PC-9 (cell line): ENCODE measurements at regions of chr6 and their contacts with region 1.

Region 1: DNA sequence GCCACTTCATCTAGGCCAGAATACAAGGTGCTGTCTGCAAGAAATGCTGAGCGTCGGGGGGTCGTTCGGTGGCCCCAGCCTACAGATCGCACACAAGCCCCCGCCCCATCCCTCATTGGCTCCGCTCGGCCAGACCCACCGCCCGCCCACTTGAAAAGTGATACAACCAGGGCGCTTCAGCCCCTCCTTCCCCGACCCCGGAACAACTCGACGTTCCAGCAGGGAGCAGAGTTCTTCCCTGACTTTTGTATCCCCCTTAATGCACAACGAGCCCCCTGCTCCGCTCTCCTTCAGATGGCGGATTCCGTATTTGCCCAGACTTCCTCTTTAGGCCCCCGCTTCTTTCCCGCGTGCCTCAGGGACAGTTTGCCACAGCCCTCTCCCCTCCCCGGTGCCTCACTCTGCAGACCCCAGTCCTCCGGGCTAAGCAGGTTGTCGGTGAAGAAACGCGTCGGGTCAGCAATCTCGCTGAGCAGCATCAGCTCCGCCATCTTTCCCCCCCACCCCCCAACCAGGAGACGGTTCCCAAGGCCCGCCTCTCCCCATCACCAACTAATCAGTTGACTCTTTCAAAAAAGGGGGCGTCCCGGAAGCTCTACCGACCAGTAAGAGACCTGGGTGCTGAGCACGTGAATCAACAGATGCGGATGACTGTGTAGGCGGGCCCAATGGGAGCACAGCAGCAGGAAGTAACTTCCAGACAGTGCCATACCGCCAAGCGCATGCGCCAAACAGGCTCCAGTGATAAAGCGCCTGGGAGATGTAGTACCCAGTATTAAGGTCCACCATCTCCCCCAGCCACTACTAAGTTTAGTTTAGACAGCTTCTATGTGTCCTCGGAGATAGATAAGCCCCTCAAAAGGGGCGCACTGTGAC is at the start of gene ATF6B:
- DNase-seq: peak; percentile 94 to 99
- H3K4me3 ChIP-seq: peak within 1 kb of the TSS; percentile 97
- H3K27ac ChIP-seq: peak within 1 kb of the TSS; percentile 57
- H3K4me1 ChIP-seq: peaks cover 29% of the 10 kb centered on the region
- H3K27me3 ChIP-seq: no peaks in the 10 kb centered on the region
- CTCF ChIP-seq: no peak
- total RNA-seq, gene ATF6B: 87.2 and 102 TPM in 2 replicates

Region 2: GRCh38 chr6:31079656-31080261 is 1048.2 kb before region 1 on chr6:
- CTCF ChIA-PET with region 1: no interaction called
- POLR2A ChIA-PET with region 1: no interaction called
- intact Hi-C with region 1: no loop called
- DNase-seq: peak; percentile 46 to 64
- H3K4me3 ChIP-seq: no peak overlapping the region
- H3K27ac ChIP-seq: no peak overlapping the region
- H3K4me1 ChIP-seq: no peaks in the 10 kb centered on the region
- H3K27me3 ChIP-seq: no peaks in the 10 kb centered on the region
- CTCF ChIP-seq: peak; percentile 90

Region 3: DNA sequence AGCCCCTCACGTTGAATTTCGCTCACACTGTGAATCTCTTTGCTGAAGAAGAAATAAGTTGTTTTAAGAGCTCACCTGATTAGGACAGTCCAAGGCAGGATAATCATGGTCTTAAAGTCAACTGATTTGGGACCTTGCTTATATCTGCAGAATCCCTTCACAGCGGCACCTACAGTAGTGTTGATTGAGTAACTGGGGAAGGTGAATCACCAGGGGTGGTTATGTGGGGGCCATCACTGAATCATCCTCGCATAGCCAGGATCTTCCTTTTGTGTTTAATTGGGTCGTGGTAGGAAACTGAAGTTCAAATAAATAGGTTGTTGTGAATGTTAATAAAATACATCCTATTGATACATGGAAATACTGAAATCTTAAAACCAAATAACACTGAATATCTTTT is 744.8 kb before region 1 on chr6:
- CTCF ChIA-PET with region 1: no interaction called
- POLR2A ChIA-PET with region 1: no interaction called
- intact Hi-C with region 1: no loop called
- DNase-seq: peak in 1 of 2 experiments; percentile 52
- H3K4me3 ChIP-seq: no peak overlapping the region
- H3K27ac ChIP-seq: no peak overlapping the region
- H3K4me1 ChIP-seq: no peaks in the 10 kb centered on the region
- H3K27me3 ChIP-seq: peaks cover 9% of the 10 kb centered on the region; the same call in 1 of the 2 replicates
- CTCF ChIP-seq: no peak

Region 4: DNA sequence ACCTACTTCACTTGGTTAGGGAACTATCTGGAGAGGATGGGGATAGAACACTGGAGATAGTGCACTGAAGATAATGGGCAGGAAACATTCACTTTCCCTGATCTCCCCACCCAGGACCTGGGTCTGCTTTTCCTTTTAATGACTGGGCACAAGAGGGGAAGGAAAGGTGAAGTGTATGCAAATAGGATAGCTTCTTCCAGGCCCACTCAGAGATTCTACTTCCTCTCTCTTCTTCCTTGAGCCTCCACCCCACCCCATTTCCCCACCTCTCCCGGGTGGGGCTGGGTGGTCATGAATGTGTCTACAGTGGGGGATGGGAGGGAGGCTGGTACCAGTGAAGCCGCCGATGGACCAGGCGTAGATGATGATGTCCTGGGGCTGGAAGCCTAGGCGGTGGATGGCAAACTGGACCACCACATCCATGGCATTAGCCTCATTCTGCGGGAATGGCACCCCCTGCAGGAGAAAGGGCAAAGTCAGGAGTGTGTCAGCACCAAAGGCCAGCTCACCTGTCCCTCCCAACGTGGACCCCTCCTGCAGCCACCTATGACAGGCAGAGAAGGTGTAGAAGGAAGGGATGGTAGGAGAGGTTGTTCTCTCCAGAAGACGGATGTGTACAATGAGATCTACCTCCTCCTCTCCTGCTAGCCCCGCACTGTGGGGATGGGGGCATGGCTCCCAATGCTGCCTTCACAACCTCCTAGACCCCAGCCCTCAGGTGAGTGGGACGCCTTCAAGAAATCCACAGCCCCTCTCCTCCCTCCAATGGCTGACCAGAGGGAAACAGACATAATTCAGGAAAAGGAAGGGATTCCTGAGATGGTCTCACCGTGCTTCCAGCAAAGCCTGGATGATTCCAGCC is 438.5 kb before region 1 on chr6:
- CTCF ChIA-PET with region 1: no interaction called
- POLR2A ChIA-PET with region 1: interaction called, 16 read pairs
- intact Hi-C with region 1: no loop called
- DNase-seq: no peak
- H3K4me3 ChIP-seq: no peak overlapping the region
- H3K27ac ChIP-seq: no peak overlapping the region
- H3K4me1 ChIP-seq: no peaks in the 10 kb centered on the region; the same call in 1 of the 2 replicates
- H3K27me3 ChIP-seq: no peaks in the 10 kb centered on the region
- CTCF ChIP-seq: peak; percentile 47; the same call in 1 of the 2 replicates

Region 5: DNA sequence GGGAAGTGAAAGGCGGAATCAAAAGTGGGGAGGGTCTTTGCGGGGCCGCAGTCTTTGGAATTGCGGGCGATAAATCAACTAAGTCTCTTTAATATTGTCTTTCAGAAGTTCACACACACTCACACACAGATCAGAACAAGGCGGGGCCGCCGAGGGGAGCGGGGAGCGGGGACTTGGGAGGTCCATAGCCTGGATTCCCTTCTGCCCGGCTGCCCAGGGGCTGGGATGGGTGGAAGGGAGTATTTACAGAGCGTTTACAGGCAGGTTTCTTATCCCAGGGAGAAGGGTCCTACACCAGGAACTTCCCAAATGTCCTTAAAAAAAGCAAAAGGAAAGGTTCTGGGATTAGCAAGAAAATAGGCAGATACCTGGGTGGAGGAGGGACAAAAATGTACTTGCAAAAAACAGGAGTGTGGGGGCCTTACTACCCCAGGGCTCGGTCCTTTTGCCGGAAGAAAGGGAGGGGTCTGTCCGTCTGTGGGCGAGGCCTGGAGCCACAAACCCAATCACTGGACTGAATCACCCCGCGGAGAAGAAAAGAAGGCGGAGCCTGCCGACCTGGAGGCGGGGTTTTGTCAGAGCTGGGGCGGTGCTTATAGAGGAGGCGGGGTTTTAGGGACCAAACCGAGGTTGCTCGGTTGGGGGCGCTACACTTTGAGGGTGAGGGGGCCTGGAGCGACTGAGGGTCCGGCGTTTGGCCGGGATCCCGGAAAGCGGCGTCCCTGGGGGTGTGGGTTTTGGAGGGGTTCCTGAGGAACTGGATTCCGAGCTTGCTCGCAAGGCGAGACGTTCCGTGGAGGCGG is 20.5 kb after region 1 on chr6:
- CTCF ChIA-PET with region 1: no interaction called
- POLR2A ChIA-PET with region 1: interaction called, 17 read pairs
- intact Hi-C with region 1: loop called (anchors 1 kb)
- DNase-seq: no peak
- H3K4me3 ChIP-seq: no peak overlapping the region
- H3K27ac ChIP-seq: no peak overlapping the region
- H3K4me1 ChIP-seq: peaks cover 39% of the 10 kb centered on the region
- H3K27me3 ChIP-seq: no peaks in the 10 kb centered on the region
- CTCF ChIP-seq: no peak

Region 6: GRCh38 chr6:32177788-32178546 is 50.0 kb after region 1 on chr6 and contains the start of gene RNF5:
- CTCF ChIA-PET with region 1: no interaction called
- POLR2A ChIA-PET with region 1: interaction called, 5 read pairs
- intact Hi-C with region 1: loop called (anchors 1 kb)
- DNase-seq: peak; percentile 91 to 99
- H3K4me3 ChIP-seq: peak within 1 kb of the TSS; percentile 98
- H3K27ac ChIP-seq: peak within 1 kb of the TSS; percentile 86
- H3K4me1 ChIP-seq: peaks cover 29% of the 10 kb centered on the region
- H3K27me3 ChIP-seq: no peaks in the 10 kb centered on the region
- CTCF ChIP-seq: no peak
- total RNA-seq, gene RNF5: 45.6 and 51.3 TPM in 2 replicates

Region 7: GRCh38 chr6:32195652-32195901 is 67.6 kb after region 1 on chr6:
- CTCF ChIA-PET with region 1: interaction called, 4 read pairs
- POLR2A ChIA-PET with region 1: interaction called, 14 read pairs
- intact Hi-C with region 1: loop called (anchors 5 kb)
- DNase-seq: peak; percentile 98 to 100
- H3K4me3 ChIP-seq: peak overlapping the region; percentile 96; the same call in 1 of the 2 replicates
- H3K27ac ChIP-seq: no peak overlapping the region
- H3K4me1 ChIP-seq: peaks cover 18% of the 10 kb centered on the region
- H3K27me3 ChIP-seq: peaks cover 4% of the 10 kb centered on the region
- CTCF ChIP-seq: no peak; the same call in none of the 2 replicates

Region 8: GRCh38 chr6:32604434-32604877 is 476.5 kb after region 1 on chr6:
- CTCF ChIA-PET with region 1: no interaction called
- POLR2A ChIA-PET with region 1: no interaction called
- intact Hi-C with region 1: no loop called
- DNase-seq: no peak
- H3K4me3 ChIP-seq: no peak overlapping the region
- H3K27ac ChIP-seq: no peak overlapping the region
- H3K4me1 ChIP-seq: no peaks in the 10 kb centered on the region
- H3K27me3 ChIP-seq: peaks cover 23% of the 10 kb centered on the region
- CTCF ChIP-seq: no peak